Psoas muscle (tissue), 8 donors: ENCODE measurements at regions of chr19 and their contacts with region 1.

Region 1: GRCh38 chr19:1266116-1266915 is 2.8 kb upstream of the CIRBP start:
- DNase-seq: peak; percentile 91 to 93
- ATAC-seq: peak; percentile 13 to 49 (median 33)
- H3K4me3 ChIP-seq: peak overlapping the region; percentile 69
- H3K27ac ChIP-seq: peak overlapping the region; percentile 85
- H3K4me1 ChIP-seq: peaks cover 49% of the 10 kb centered on the region
- H3K27me3 ChIP-seq: no peaks in the 10 kb centered on the region
- CTCF ChIP-seq: no peak

Region 2: DNA sequence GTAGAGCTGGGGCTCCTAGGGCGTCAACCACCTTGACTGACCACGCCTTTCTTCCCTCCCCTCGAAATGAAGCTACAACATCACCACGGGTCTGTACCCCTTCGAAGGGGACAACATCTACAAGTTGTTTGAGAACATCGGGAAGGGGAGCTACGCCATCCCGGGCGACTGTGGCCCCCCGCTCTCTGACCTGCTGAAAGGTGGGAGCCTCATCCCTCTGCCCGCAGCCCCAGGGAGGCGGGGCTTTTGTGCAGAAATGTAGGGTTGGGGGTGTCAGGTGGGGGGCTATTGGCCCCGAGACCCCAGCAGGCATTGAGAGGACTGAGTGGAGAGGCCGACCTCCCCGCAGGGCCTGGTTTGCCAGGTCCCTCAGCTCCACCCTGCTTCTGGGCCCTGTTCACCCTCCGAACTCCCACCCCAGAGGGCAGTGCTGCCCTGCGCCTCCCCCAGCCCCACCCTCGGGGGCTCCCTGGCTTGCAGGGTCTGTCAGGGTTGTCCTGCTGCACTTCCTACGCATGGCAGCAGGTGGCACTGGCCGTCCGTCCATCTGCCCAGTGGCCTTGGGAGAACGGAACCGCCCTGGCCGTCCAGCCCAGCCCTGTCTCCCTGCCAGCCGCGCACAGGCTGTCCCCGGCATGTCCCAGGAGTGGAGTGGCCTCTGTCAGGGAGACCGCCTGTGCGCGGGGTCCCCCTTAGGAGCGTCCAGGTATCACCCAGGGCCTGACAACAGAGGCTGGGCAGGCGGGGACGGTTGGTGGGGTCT is 45.0 kb before region 1 on chr19:
- intact Hi-C with region 1: loop called in 1 of 2 experiments (anchors 2 kb)
- DNase-seq: peak; percentile 81 to 94
- ATAC-seq: peak; percentile 68 to 80 (median 73)
- H3K4me3 ChIP-seq: no peak overlapping the region
- H3K27ac ChIP-seq: peak overlapping the region; percentile 99
- H3K4me1 ChIP-seq: peaks cover 65% of the 10 kb centered on the region
- H3K27me3 ChIP-seq: no peaks in the 10 kb centered on the region
- CTCF ChIP-seq: peak; percentile 84

Region 3: GRCh38 chr19:1373534-1374249 is 107.4 kb after region 1 on chr19:
- intact Hi-C with region 1: no loop called
- DNase-seq: peak in 1 of 2 donors; percentile 72
- ATAC-seq: peak; percentile 25 to 48 (median 38)
- H3K4me3 ChIP-seq: no peak overlapping the region
- H3K27ac ChIP-seq: peak overlapping the region; percentile 41
- H3K4me1 ChIP-seq: no peaks in the 10 kb centered on the region
- H3K27me3 ChIP-seq: no peaks in the 10 kb centered on the region
- CTCF ChIP-seq: no peak